Activated CD8-positive, alpha-beta memory T cell treated with anti-CD3 and anti-CD28 coated beads, Interleukin-2, amount 10 ng/mL, durations not matched to agents 7 days and 5 days (primary cell): ENCODE measurements at regions of chr14 and their contacts with region 1.

Region 1: GRCh38 chr14:81523616-81524015 is 10.0 kb downstream of the SEL1L start:
- DNase-seq: no peak
- ATAC-seq: peak; percentile 75
- H3K4me3 Mint-ChIP-seq: no peak overlapping the region
- H3K27ac Mint-ChIP-seq: peak overlapping the region; percentile 11
- H3K4me1 Mint-ChIP-seq: peaks cover 45% of the 10 kb centered on the region
- H3K27me3 Mint-ChIP-seq: no peaks in the 10 kb centered on the region

Region 2: GRCh38 chr14:81220830-81221578 is 302.6 kb before region 1 on chr14 and contains the start of gene GTF2A1:
- CTCF ChIA-PET with region 1: no interaction called
- DNase-seq: peak; percentile 96
- ATAC-seq: peak; percentile 80
- H3K4me3 Mint-ChIP-seq: peak within 1 kb of the TSS; percentile 93
- H3K27ac Mint-ChIP-seq: peak within 1 kb of the TSS; percentile 99
- H3K4me1 Mint-ChIP-seq: peaks cover 38% of the 10 kb centered on the region
- H3K27me3 Mint-ChIP-seq: peaks cover 3% of the 10 kb centered on the region
- total RNA-seq, gene GTF2A1: 32.2 to 34.7 TPM

Region 3: GRCh38 chr14:81533536-81534343 is 10.1 kb after region 1 on chr14 and contains the start of gene SEL1L:
- CTCF ChIA-PET with region 1: interaction called, 13 read pairs
- DNase-seq: peak; percentile 99
- ATAC-seq: peak; percentile 96
- H3K4me3 Mint-ChIP-seq: peak within 1 kb of the TSS; percentile 92
- H3K27ac Mint-ChIP-seq: peak within 1 kb of the TSS; percentile 85
- H3K4me1 Mint-ChIP-seq: peaks cover 42% of the 10 kb centered on the region
- H3K27me3 Mint-ChIP-seq: peaks cover under 1% of the 10 kb centered on the region
- total RNA-seq, gene SEL1L: 59.0 to 65.3 TPM